Left cardiac atrium (tissue), 4 donors: ENCODE measurements at regions of chr1 and their contacts with region 1.

Region 1: GRCh38 chr1:191993549-191993948 is 164.7 kb upstream of the RGS18 start:
- DNase-seq: no peak
- ATAC-seq: no peak

Region 2: GRCh38 chr1:192311281-192311680 is 317.7 kb after region 1 on chr1:
- intact Hi-C with region 1: loop called in 1 of 2 experiments (anchors 5 kb)
- DNase-seq: no peak
- ATAC-seq: no peak

Region 3: GRCh38 chr1:192445848-192446489 is 452.4 kb after region 1 on chr1:
- intact Hi-C with region 1: loop called in 1 of 2 experiments (anchors 5 kb)
- DNase-seq: peak; percentile 46
- ATAC-seq: no peak